IMR-90 (cell line): ENCODE measurements at regions of chr3 and their contacts with region 1.

Region 1: GRCh38 chr3:15845475-15845874 is 47.7 kb upstream of the ANKRD28 start:
- DNase-seq: no peak
- ATAC-seq: no peak
- H3K4me3 ChIP-seq: no peak overlapping the region
- H3K27ac ChIP-seq: no peak overlapping the region
- H3K4me1 ChIP-seq: no peaks in the 10 kb centered on the region
- H3K27me3 ChIP-seq: no peaks in the 10 kb centered on the region
- CTCF ChIP-seq: no peak
- POLR2A ChIP-seq: no peak
- RAD21 ChIP-seq: no peak

Region 2: GRCh38 chr3:15405448-15406050 is 439.9 kb before region 1 on chr3:
- CTCF ChIA-PET with region 1: no interaction called
- POLR2A ChIA-PET with region 1: no interaction called
- dilution Hi-C with region 1: no loop called
- in situ Hi-C with region 1: no loop called
- intact Hi-C with region 1: no loop called
- DNase-seq: peak; percentile 71
- ATAC-seq: peak; percentile 77
- H3K4me3 ChIP-seq: no peak overlapping the region
- H3K27ac ChIP-seq: no peak overlapping the region
- H3K4me1 ChIP-seq: no peaks in the 10 kb centered on the region
- H3K27me3 ChIP-seq: no peaks in the 10 kb centered on the region
- CTCF ChIP-seq: peak; percentile 65
- POLR2A ChIP-seq: no peak
- RAD21 ChIP-seq: peak; percentile 68

Region 3: GRCh38 chr3:15743587-15744009 is 101.9 kb before region 1 on chr3:
- CTCF ChIA-PET with region 1: no interaction called
- POLR2A ChIA-PET with region 1: no interaction called
- dilution Hi-C with region 1: no loop called
- in situ Hi-C with region 1: no loop called
- intact Hi-C with region 1: no loop called
- DNase-seq: no peak
- ATAC-seq: no peak
- H3K4me3 ChIP-seq: no peak overlapping the region
- H3K27ac ChIP-seq: no peak overlapping the region
- H3K4me1 ChIP-seq: no peaks in the 10 kb centered on the region
- H3K27me3 ChIP-seq: no peaks in the 10 kb centered on the region
- CTCF ChIP-seq: no peak
- POLR2A ChIP-seq: no peak
- RAD21 ChIP-seq: no peak

Region 4: GRCh38 chr3:16247276-16248061 is 402.0 kb after region 1 on chr3:
- CTCF ChIA-PET with region 1: no interaction called
- POLR2A ChIA-PET with region 1: no interaction called
- dilution Hi-C with region 1: no loop called
- in situ Hi-C with region 1: no loop called
- intact Hi-C with region 1: no loop called
- DNase-seq: peak; percentile 84
- ATAC-seq: peak; percentile 88
- H3K4me3 ChIP-seq: no peak overlapping the region
- H3K27ac ChIP-seq: no peak overlapping the region
- H3K4me1 ChIP-seq: peaks cover 13% of the 10 kb centered on the region
- H3K27me3 ChIP-seq: no peaks in the 10 kb centered on the region
- CTCF ChIP-seq: peak; percentile 96
- POLR2A ChIP-seq: peak; percentile 50
- RAD21 ChIP-seq: peak; percentile 99

Region 5: GRCh38 chr3:16300881-16301359 is 455.4 kb after region 1 on chr3:
- CTCF ChIA-PET with region 1: no interaction called
- POLR2A ChIA-PET with region 1: no interaction called
- dilution Hi-C with region 1: no loop called
- in situ Hi-C with region 1: no loop called
- intact Hi-C with region 1: no loop called
- DNase-seq: no peak
- ATAC-seq: no peak
- H3K4me3 ChIP-seq: no peak overlapping the region
- H3K27ac ChIP-seq: no peak overlapping the region
- H3K4me1 ChIP-seq: 0 out of 2 replicates have a peak, but pooled peaks cover 2% of the 10 kb centered on the region
- H3K27me3 ChIP-seq: no peaks in the 10 kb centered on the region
- CTCF ChIP-seq: no peak
- POLR2A ChIP-seq: no peak
- RAD21 ChIP-seq: no peak

Region 6: DNA sequence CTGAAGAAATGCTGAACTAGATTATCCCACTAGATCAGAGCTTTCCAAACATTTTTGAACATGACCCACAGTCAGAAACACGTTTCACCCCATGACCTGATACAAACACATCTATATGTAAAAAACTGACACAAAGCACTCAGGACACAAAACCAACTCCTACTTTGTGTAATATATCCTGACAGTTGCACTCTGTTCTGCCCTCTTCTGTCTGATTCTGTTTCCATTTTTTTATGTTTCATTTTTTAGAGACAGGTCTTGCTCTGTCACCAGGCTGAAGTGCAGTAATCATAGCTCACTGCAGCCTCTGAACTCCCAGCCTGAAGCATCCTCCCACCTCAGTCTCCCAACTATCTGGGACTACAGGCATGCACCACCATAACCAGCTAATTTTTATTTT is 683.8 kb after region 1 on chr3:
- CTCF ChIA-PET with region 1: no interaction called
- POLR2A ChIA-PET with region 1: no interaction called
- dilution Hi-C with region 1: no loop called
- in situ Hi-C with region 1: loop called (anchors 25 kb)
- intact Hi-C with region 1: no loop called
- DNase-seq: no peak
- ATAC-seq: no peak
- H3K4me3 ChIP-seq: no peak overlapping the region
- H3K27ac ChIP-seq: no peak overlapping the region
- H3K4me1 ChIP-seq: no peaks in the 10 kb centered on the region
- H3K27me3 ChIP-seq: peaks cover 37% of the 10 kb centered on the region
- CTCF ChIP-seq: peak; percentile 31
- POLR2A ChIP-seq: no peak
- RAD21 ChIP-seq: no peak